Activated T-helper 1 cell treated with anti-CD3 and anti-CD28 coated beads, Interleukin-12 subunit alpha, Interleukin-12 subunit beta, Interleukin-2, Interleukin-4 antibody, amounts not matched to agents 30 ng/mL and 10 ng/mL and 1 ng/mL, durations not matched to agents 14 hours and 24 hours and 36 hours (primary cell): ENCODE measurements at regions of chr17 and their contacts with region 1.

Region 1: DNA sequence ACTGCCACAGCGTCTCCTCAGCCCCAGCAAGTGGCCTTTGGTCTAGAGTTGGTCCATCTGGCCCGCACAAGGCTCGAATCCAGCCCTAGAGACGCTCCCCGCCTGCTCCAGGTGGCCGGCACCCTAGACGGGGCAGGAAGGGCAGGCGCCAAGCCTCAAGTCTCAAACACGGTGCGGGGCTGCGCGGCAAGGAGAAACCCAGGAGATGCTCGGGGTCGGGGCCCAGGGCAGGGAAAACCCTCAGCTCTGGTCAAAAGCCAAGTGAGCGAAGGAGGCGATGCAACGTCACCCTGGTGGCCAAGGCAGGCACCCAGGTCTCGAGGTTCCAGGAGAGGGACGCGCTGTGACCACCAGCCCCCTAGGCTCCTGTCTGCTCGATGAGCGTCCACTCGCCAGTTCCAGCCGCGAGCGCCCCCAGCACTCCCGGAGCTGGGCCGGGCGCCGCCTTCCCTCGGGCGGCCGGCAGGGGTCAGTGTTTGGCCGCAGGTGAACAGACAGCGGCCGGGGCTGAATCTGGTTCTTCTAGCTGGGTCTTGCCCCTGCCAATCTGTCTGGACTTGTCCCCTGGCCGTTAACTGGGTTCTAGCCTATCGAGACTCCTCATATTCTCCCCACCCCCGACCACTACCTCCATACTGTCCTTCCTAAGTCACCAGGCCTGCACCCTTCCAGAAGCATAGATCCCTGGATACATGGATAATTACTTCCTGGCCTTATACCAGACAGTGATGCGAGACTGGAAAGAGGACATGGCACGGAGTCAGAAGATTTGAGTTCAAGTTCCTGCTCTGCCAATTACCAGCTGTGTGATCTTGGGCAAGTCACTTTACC is 44.0 kb downstream of the PRAC1 start:
- DNase-seq: peak; percentile 60
- H3K4me3 Mint-ChIP-seq: no peak overlapping the region
- H3K27ac Mint-ChIP-seq: no peak overlapping the region
- H3K4me1 Mint-ChIP-seq: no peaks in the 10 kb centered on the region
- H3K27me3 Mint-ChIP-seq: peaks cover 53% of the 10 kb centered on the region

Region 2: GRCh38 chr17:48215583-48216139 is 462.7 kb before region 1 on chr17:
- intact Hi-C with region 1: no loop called
- DNase-seq: no peak
- H3K4me3 Mint-ChIP-seq: no peak overlapping the region
- H3K27ac Mint-ChIP-seq: no peak overlapping the region
- H3K4me1 Mint-ChIP-seq: no peaks in the 10 kb centered on the region
- H3K27me3 Mint-ChIP-seq: no peaks in the 10 kb centered on the region

Region 3: GRCh38 chr17:48791128-48792032 is 113.0 kb after region 1 on chr17:
- intact Hi-C with region 1: loop called (anchors 2 kb)
- DNase-seq: no peak
- H3K4me3 Mint-ChIP-seq: no peak overlapping the region
- H3K27ac Mint-ChIP-seq: no peak overlapping the region
- H3K4me1 Mint-ChIP-seq: peaks cover 14% of the 10 kb centered on the region
- H3K27me3 Mint-ChIP-seq: peaks cover 42% of the 10 kb centered on the region